Sciatic nerve (tissue), 2 donors: ENCODE measurements at regions of chr17 and their contacts with region 1.

Region 1: GRCh38 chr17:29645515-29646051 is 22.9 kb upstream of the CORO6 start:
- DNase-seq: peak; percentile 81
- ATAC-seq: peak; percentile 93

Region 2: GRCh38 chr17:29514792-29515191 is 130.8 kb before region 1 on chr17:
- intact Hi-C with region 1: no loop called
- DNase-seq: no peak
- ATAC-seq: no peak

Region 3: DNA sequence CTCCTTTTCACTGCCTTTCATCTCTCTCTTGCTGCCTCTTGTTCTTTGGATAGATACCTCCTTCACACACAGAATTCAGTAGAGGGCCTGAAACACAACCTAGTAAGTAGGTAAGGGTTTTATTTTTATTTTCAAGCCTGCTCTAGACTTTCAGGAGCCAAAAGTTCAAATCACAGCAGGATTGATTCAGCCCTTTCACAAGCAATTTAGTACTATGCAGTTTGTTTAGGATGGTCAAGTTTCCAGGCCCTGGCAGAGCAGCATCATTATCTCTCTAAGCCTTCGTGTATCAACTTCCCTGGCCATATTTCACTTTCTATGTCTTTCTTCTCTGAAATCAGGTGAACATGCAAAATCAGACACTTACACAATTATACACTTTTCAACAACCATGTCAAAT is 126.0 kb after region 1 on chr17:
- intact Hi-C with region 1: loop called (anchors 10 kb)
- DNase-seq: no peak
- ATAC-seq: no peak